ENCODE measurements at regions of chr17 and their contacts with region 1.

Region 1: GRCh38 chr17:17766077-17766743 is 70.6 kb downstream of the SREBF1 start:
- DNase-seq: no peak
- H3K4me3 ChIP-seq: no peak overlapping the region
- CTCF ChIP-seq: no peak

Region 2: GRCh38 chr17:17694169-17695081 is 71.8 kb before region 1 on chr17:
- in situ Hi-C with region 1: loop called (anchors 5 kb)
- DNase-seq: no peak
- H3K4me3 ChIP-seq: peak overlapping the region; percentile 51
- CTCF ChIP-seq: no peak

Measured in astrocyte of the cerebellum (primary cell).